ENCODE measurements at regions of chr6 and their contacts with region 1.

Region 1: DNA sequence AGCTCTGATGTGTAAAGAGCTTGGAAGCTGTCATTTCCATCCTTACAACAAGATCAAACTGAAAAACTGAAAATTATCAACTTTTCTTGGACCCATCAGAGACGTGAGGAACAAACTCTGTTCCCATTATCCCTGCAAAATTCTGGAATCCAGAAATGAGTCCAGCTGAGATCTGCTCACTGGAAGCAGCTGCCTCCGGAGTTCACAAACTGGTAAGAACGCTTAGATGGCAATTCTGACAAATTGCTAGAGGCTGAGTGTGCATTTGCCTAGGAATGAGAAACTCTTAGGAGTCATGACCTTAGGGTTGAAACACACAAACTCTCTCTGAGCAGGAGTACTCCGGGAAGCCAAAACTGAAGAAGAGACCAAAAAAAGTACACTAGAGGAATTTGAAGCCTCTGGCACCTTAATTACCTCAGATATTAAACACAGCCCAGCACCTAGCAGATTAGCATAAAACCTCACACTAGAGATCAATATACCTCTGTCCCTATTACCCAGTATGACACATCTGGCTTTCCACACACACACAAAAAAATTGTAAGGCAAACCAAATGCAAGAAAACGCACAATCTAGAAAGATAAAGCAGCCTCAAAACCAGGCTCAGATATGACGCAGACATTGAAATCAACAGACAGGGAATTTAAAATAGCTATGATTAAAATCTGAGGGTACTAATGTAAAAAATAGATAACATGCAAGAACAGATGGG is 233.5 kb upstream of the SGK1 start:
- DNase-seq: peak; percentile 76
- H3K4me3 ChIP-seq: no peak overlapping the region
- H3K27ac ChIP-seq: peak overlapping the region; percentile 86
- H3K4me1 ChIP-seq: peaks cover 28% of the 10 kb centered on the region
- H3K27me3 ChIP-seq: no peaks in the 10 kb centered on the region
- CTCF ChIP-seq: no peak
- POLR2A ChIP-seq: no peak

Region 2: GRCh38 chr6:134295953-134296553 is 255.3 kb before region 1 on chr6:
- CTCF ChIA-PET with region 1: no interaction called
- POLR2A ChIA-PET with region 1: interaction called, 11 read pairs
- dilution Hi-C with region 1: no loop called
- intact Hi-C with region 1: loop called (anchors 1 kb)
- DNase-seq: peak; percentile 94
- H3K4me3 ChIP-seq: no peak overlapping the region
- H3K27ac ChIP-seq: peak overlapping the region; percentile 99
- H3K4me1 ChIP-seq: peaks cover 23% of the 10 kb centered on the region
- H3K27me3 ChIP-seq: no peaks in the 10 kb centered on the region
- CTCF ChIP-seq: no peak
- POLR2A ChIP-seq: peak; percentile 81

Region 3: DNA sequence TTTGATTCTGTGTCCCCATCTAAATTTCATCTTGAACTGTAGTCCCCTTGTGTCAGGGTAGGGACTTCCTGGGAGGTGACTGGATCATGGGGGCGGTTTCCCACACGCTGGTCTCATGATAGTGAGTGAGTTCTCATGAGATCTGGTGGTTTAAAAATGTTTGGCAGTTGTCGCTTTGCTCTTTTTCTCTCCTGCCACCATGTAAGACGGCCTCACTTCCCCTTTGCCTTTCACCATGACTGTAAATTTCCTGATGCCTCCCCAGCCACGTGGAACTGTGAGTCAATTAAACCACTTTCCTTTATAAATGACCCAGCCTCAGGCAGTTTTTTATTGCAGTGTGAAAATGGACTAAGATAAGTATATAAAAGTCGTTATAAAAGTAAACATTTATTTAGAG is 152.9 kb before region 1 on chr6:
- CTCF ChIA-PET with region 1: no interaction called
- POLR2A ChIA-PET with region 1: no interaction called
- dilution Hi-C with region 1: no loop called
- intact Hi-C with region 1: no loop called
- DNase-seq: peak; percentile 48
- H3K4me3 ChIP-seq: no peak overlapping the region
- H3K27ac ChIP-seq: no peak overlapping the region
- H3K4me1 ChIP-seq: no peaks in the 10 kb centered on the region
- H3K27me3 ChIP-seq: no peaks in the 10 kb centered on the region
- CTCF ChIP-seq: no peak
- POLR2A ChIP-seq: no peak

Region 4: GRCh38 chr6:134436281-134436815 is 115.1 kb before region 1 on chr6:
- CTCF ChIA-PET with region 1: interaction called, 6 read pairs
- POLR2A ChIA-PET with region 1: no interaction called
- dilution Hi-C with region 1: loop called (anchors 25 kb)
- intact Hi-C with region 1: loop called (anchors 1 kb)
- DNase-seq: peak; percentile 94
- H3K4me3 ChIP-seq: peak overlapping the region in 1 of 3 experiments; percentile 3
- H3K27ac ChIP-seq: peak overlapping the region; percentile 88
- H3K4me1 ChIP-seq: peaks cover 20% of the 10 kb centered on the region
- H3K27me3 ChIP-seq: no peaks in the 10 kb centered on the region
- CTCF ChIP-seq: no peak
- POLR2A ChIP-seq: no peak

Region 5: DNA sequence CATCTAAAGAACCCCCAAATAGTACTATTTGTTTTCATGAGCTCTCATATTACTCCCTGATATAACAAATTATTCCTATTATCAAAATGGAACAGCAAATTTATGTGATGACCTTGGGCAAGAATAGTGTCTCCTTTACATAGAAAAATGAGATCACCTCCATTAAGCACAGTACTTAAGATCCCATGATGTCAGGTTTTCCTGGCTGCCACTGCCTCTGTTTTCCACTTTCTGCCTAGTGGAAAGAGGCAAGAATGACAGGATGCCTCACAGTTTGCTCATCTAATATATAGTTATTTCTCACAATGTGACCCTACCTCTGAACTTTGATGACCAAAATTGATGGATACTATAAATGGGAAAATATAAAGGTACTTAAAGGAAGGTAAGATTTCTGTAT is 26.6 kb after region 1 on chr6:
- CTCF ChIA-PET with region 1: no interaction called
- POLR2A ChIA-PET with region 1: no interaction called
- dilution Hi-C with region 1: no loop called
- intact Hi-C with region 1: no loop called
- DNase-seq: peak; percentile 40
- H3K4me3 ChIP-seq: no peak overlapping the region
- H3K27ac ChIP-seq: no peak overlapping the region
- H3K4me1 ChIP-seq: no peaks in the 10 kb centered on the region
- H3K27me3 ChIP-seq: no peaks in the 10 kb centered on the region
- CTCF ChIP-seq: peak in 1 of 2 donors; percentile 7
- POLR2A ChIP-seq: no peak

Region 6: DNA sequence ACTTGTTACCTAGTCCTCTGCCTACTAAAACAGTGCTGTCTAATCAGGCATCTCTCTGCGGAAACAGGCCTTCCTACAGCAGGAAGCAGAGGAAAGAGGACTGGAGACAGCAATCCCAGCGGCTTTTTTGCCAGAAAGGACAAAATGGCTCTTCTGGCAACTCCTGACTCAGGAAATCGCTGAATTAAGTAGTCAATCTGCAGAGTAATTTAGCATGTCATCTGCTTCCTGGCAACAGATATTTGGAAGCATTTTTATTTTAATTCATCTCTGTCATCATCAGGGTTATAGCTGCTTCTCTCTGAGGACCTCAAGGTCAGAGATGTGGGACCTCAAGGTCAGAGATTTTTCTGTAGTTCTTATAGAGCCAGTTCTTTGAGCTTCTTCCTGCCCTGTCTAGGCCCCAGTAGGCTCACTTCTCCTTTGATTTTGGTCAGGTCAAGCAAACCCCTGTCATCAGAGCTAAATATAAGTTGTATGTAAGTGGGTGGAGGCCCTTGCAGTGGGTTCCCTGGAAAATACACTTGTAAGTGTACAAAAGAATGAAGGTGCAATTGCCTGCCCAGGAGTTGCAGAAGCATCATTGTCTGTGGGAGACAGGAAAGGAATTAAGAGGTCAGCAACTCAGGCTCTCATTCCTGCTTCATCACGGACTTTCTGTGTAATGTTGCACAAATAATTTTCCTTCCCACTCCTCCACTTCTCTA is 169.1 kb after region 1 on chr6:
- CTCF ChIA-PET with region 1: no interaction called
- POLR2A ChIA-PET with region 1: no interaction called
- dilution Hi-C with region 1: no loop called
- intact Hi-C with region 1: loop called (anchors 2 kb)
- DNase-seq: peak; percentile 94
- H3K4me3 ChIP-seq: no peak overlapping the region
- H3K27ac ChIP-seq: peak overlapping the region; percentile 74
- H3K4me1 ChIP-seq: peaks cover 37% of the 10 kb centered on the region
- H3K27me3 ChIP-seq: no peaks in the 10 kb centered on the region
- CTCF ChIP-seq: no peak
- POLR2A ChIP-seq: peak; percentile 61

Measured in endothelial cell of umbilical vein (primary cell).